Calu3 (cell line): ENCODE measurements at regions of chr22 and their contacts with region 1.

Region 1: GRCh38 chr22:41832553-41833368 is at the start of gene SREBF2:
- DNase-seq: peak; percentile 99
- H3K4me3 Mint-ChIP-seq: peak within 1 kb of the TSS; percentile 87
- H3K27ac Mint-ChIP-seq: peak within 1 kb of the TSS; percentile 93
- H3K4me1 Mint-ChIP-seq: peaks cover 39% of the 10 kb centered on the region
- H3K27me3 Mint-ChIP-seq: no peaks in the 10 kb centered on the region
- CTCF ChIP-seq: no peak
- total RNA-seq, gene SREBF2: 145 and 159 TPM in 2 replicates

Region 2: DNA sequence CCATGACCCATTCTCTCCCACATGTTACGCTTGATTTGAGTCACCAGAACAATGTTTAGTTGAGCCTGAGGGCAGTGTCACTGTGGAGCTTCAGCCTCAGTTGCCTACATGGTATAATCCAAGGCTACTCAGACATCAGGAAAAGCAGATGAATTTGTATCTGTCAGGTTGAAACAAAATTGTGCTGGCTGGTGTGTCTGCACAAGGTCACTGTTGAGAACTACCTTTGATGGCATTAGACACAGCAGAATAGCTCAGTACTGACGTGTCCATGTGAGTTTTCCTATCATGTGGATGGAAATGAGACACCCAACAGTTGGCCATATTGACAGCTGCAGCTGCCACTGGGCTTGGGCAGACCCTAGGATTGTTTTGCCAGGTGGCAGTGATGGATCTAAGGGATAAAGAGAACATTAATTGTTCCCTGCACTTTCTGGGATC is 16.6 kb before region 1 on chr22:
- CTCF ChIA-PET with region 1: no interaction called
- intact Hi-C with region 1: no loop called
- DNase-seq: no peak
- H3K4me3 Mint-ChIP-seq: no peak overlapping the region
- H3K27ac Mint-ChIP-seq: no peak overlapping the region
- H3K4me1 Mint-ChIP-seq: no peaks in the 10 kb centered on the region
- H3K27me3 Mint-ChIP-seq: no peaks in the 10 kb centered on the region
- CTCF ChIP-seq: no peak

Region 3: GRCh38 chr22:41857155-41857859 is 24.5 kb after region 1 on chr22:
- CTCF ChIA-PET with region 1: interaction called, 10 read pairs
- intact Hi-C with region 1: no loop called
- DNase-seq: peak; percentile 72
- H3K4me3 Mint-ChIP-seq: no peak overlapping the region
- H3K27ac Mint-ChIP-seq: peak overlapping the region; percentile 63
- H3K4me1 Mint-ChIP-seq: peaks cover 35% of the 10 kb centered on the region
- H3K27me3 Mint-ChIP-seq: no peaks in the 10 kb centered on the region
- CTCF ChIP-seq: peak; percentile 68

Region 4: DNA sequence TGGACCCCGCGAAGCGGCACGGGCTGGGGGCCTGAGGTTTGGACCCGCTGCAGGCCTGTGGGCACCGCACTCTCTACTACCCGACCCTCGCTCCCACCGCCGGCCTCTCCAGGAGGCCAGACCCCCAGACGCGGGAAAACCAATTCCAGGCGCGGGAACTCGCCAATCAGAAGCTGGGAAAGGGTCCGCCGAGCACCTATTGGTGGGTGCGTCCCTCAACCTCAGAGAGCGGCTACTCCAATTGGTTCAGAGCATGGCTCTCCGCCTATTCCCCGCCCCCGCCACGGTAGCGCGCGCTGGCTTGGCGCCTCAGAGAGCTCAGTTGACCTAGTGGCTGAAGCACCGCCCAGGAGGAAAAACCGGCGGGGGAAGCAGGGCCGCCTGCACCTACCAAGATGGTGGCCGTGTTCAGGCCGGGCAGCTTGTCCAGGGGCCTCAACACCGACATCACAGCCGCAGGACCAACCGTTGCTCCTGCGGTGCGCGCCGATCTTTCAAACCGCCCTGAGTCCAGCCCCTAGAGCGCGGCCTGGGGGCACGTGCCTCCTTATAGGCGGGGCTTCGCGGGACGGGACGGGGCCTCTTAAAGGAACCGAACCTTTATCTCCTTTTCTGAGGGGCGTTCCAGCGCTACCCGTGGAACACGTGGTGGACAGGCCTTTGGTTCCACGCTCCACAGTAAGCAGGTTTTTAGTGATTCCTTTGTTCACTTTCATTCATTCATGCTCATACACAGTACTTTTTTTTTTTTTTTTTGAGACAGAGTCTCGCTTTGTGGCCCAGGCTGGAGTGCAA is 114.1 kb after region 1 on chr22 and contains the start of gene CENPM:
- CTCF ChIA-PET with region 1: interaction called, 6 read pairs
- intact Hi-C with region 1: loop called (anchors 2 kb)
- DNase-seq: peak; percentile 97
- H3K4me3 Mint-ChIP-seq: peak within 1 kb of the TSS; percentile 79
- H3K27ac Mint-ChIP-seq: peak within 1 kb of the TSS; percentile 62
- H3K4me1 Mint-ChIP-seq: peaks cover 52% of the 10 kb centered on the region
- H3K27me3 Mint-ChIP-seq: no peaks in the 10 kb centered on the region
- CTCF ChIP-seq: no peak
- total RNA-seq, gene CENPM: 46.7 and 69.3 TPM in 2 replicates